ENCODE measurements at regions of chr10 and their contacts with region 1.

Region 1: GRCh38 chr10:3563298-3563697 is 221.7 kb downstream of the KLF6 start:
- DNase-seq: peak; percentile 65
- H3K4me3 Mint-ChIP-seq: no peak overlapping the region
- H3K27ac Mint-ChIP-seq: peak overlapping the region; percentile 86
- H3K4me1 Mint-ChIP-seq: peaks cover 12% of the 10 kb centered on the region
- H3K27me3 Mint-ChIP-seq: peaks cover 2% of the 10 kb centered on the region

Region 2: GRCh38 chr10:3467052-3467951 is 96.0 kb before region 1 on chr10:
- intact Hi-C with region 1: loop called (anchors 1 kb)
- DNase-seq: peak; percentile 79
- H3K4me3 Mint-ChIP-seq: peak overlapping the region; percentile 82
- H3K27ac Mint-ChIP-seq: peak overlapping the region; percentile 96
- H3K4me1 Mint-ChIP-seq: peaks cover 51% of the 10 kb centered on the region
- H3K27me3 Mint-ChIP-seq: no peaks in the 10 kb centered on the region

Region 3: GRCh38 chr10:3616880-3617279 is 53.6 kb after region 1 on chr10:
- intact Hi-C with region 1: no loop called
- DNase-seq: no peak
- H3K4me3 Mint-ChIP-seq: no peak overlapping the region
- H3K27ac Mint-ChIP-seq: no peak overlapping the region
- H3K4me1 Mint-ChIP-seq: peaks cover 9% of the 10 kb centered on the region
- H3K27me3 Mint-ChIP-seq: peaks cover 7% of the 10 kb centered on the region

Measured in activated CD4-positive, alpha-beta T cell treated with anti-CD3 and anti-CD28 coated beads, Interleukin-2, amount 10 ng/mL, durations not matched to agents 24 days and 14 days (primary cell).